ENCODE measurements at regions of chr6 and their contacts with region 1.

Region 1: DNA sequence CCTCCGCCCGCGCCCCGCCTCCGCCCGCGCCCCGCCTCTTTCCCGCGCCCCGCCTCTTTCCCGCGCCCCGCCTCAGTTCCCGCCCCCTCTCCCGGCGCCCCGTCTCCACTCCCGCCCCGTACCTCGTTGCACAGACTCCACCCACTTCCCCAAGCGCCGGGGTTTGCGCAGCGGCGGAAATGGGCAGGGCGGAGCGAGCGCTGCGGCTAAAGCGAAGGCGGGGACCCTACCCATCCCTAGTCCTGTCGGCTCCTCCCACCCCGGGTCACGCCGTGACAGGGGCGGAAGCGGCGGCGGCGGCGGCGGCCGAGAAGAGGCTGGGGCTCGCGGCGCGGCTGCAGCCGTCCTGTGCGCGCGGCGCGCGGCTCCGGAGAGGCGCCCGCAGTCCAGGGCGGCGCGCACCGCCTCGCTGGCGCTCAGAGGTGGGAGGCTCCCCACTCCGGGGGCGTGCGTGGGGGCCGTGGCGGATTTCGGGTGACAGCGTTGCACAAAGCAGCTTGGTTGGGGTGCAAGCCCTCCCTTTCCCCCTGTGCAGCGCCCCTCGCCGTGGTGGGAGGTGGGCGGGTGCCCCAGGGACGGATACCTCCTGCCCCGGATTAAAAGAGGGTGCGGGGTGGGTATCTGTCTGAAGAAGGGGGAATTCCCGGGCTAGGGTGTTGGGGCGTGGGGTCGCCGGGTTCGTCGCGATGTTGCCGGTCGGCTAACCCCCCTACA is at the start of gene KDM1B:
- DNase-seq: peak; percentile 99
- ATAC-seq: peak; percentile 98 to 99 (median 99)
- H3K4me3 ChIP-seq: peak within 1 kb of the TSS; percentile 84 to 100 (median 96)
- H3K27ac ChIP-seq: peak within 1 kb of the TSS in 9 of 10 donors; percentile 81 to 94 (median 91)
- H3K4me1 ChIP-seq: peaks cover 0 to 36% (median 27%) of the 10 kb centered on the region in 9 donors
- H3K27me3 ChIP-seq: no peaks in the 10 kb centered on the region
- CTCF ChIP-seq: no peak
- total RNA-seq, gene KDM1B: 9.8 to 22.5 (median 16.0) TPM

Region 2: GRCh38 chr6:17706580-17707370 is 448.5 kb before region 1 on chr6 and contains the start of gene NUP153:
- intact Hi-C with region 1: loop called in 1 of 10 experiments (anchors 10 kb)
- DNase-seq: peak; percentile 98 to 99
- ATAC-seq: peak; percentile 86 to 94 (median 88)
- H3K4me3 ChIP-seq: peak within 1 kb of the TSS; percentile 71 to 100 (median 96)
- H3K27ac ChIP-seq: peak within 1 kb of the TSS; percentile 94 to 100 (median 99)
- H3K4me1 ChIP-seq: peaks cover 3 to 47% (median 35%) of the 10 kb centered on the region in 9 donors
- H3K27me3 ChIP-seq: no peaks in the 10 kb centered on the region
- CTCF ChIP-seq: no peak
- total RNA-seq, gene NUP153: 20.7 to 30.5 (median 26.0) TPM

Region 3: DNA sequence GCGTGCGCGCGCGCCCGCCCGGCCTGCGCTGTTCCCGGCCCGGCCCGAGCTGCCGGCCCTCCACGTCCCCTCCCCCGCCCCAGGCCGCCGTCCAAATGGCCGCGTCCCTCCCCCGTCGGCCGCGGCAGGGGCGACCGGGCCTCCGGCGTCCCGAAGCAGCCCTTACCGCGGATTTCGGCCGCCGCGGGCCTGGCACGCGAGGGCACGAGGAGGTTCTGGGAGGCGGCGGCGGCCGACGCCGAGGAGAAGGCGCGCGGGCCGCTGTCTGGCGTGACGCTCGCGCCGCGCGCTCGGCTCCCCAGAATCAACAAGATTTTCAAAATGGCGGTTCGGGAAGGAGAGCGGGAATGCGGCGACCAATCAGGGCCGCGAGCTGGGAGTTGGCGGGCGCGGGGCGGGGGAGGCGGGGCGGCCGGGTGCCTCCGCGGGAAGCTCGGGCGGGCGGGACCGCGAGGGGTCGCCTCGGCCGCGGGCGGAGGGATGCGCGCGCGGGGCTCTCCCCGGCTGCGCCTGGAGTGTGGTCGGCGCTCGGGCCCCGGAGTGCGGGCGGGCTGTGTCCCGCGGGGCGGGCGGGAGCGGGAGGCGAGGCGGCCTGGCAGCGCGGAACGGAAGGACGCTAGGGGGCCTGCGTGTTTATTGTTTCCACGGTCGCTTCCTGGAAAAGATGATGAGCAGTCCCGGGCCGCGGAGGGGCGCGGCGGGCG is 109.1 kb after region 1 on chr6 and contains the start of gene DEK:
- intact Hi-C with region 1: loop called in 4 of 10 experiments (anchors 5 to 10 kb)
- DNase-seq: peak; percentile 89 to 90
- ATAC-seq: peak; percentile 77 to 92 (median 88)
- H3K4me3 ChIP-seq: peak within 1 kb of the TSS; percentile 74 to 95 (median 90)
- H3K27ac ChIP-seq: peak within 1 kb of the TSS; percentile 89 to 98 (median 94)
- H3K4me1 ChIP-seq: peaks cover 0 to 45% (median 38%) of the 10 kb centered on the region in 9 donors
- H3K27me3 ChIP-seq: no peaks in the 10 kb centered on the region
- CTCF ChIP-seq: peak; percentile 36 to 78 (median 62)
- total RNA-seq, gene DEK: 38.6 to 78.3 (median 55.6) TPM

Measured in heart right ventricle (tissue), 16 donors.